Endothelial cell of umbilical vein (primary cell): ENCODE measurements at regions of chr1 and their contacts with region 1.

Region 1: DNA sequence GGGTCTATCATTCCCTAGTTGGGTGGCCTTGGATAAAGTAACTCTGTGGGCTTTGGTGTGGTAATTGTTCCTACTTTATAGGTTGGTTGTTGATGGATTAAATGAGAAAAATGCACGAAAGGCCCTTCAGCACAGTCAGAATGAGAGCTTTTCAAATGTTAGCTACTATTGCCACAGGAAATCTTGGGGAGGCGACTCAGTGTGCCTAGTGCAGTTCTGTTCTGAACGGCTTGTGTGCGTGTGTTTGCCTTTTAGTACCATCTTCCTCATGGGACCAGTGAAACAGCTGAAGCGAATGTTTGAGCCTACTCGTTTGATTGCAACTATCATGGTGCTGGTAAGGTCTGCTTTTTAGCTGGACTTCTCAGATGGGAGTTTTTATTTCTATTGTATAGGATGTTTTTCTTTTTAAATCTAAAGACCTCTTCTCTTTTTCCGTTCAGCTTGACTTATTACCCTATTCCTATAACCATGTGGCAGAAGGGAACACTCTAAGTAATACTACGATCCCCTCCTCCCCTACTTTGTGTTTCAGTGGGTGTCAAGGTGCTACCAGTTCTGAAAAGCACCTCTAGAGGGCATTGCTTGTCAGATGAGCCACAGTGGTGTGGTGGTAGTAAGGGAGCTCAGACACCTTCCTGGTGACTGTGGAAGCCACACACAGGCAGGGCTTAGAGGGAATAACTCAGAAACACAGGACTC is 9.2 kb downstream of the SFT2D2 start:
- DNase-seq: peak; percentile 64
- H3K4me3 ChIP-seq: no peak overlapping the region
- H3K27ac ChIP-seq: no peak overlapping the region
- H3K4me1 ChIP-seq: no peaks in the 10 kb centered on the region
- H3K27me3 ChIP-seq: no peaks in the 10 kb centered on the region
- CTCF ChIP-seq: peak; percentile 75 to 79
- POLR2A ChIP-seq: no peak

Region 2: GRCh38 chr1:167881069-167881468 is 353.9 kb before region 1 on chr1:
- CTCF ChIA-PET with region 1: no interaction called
- POLR2A ChIA-PET with region 1: no interaction called
- dilution Hi-C with region 1: no loop called
- intact Hi-C with region 1: no loop called
- DNase-seq: no peak
- H3K4me3 ChIP-seq: no peak overlapping the region
- H3K27ac ChIP-seq: no peak overlapping the region
- H3K4me1 ChIP-seq: no peaks in the 10 kb centered on the region
- H3K27me3 ChIP-seq: no peaks in the 10 kb centered on the region
- CTCF ChIP-seq: no peak
- POLR2A ChIP-seq: no peak

Region 3: DNA sequence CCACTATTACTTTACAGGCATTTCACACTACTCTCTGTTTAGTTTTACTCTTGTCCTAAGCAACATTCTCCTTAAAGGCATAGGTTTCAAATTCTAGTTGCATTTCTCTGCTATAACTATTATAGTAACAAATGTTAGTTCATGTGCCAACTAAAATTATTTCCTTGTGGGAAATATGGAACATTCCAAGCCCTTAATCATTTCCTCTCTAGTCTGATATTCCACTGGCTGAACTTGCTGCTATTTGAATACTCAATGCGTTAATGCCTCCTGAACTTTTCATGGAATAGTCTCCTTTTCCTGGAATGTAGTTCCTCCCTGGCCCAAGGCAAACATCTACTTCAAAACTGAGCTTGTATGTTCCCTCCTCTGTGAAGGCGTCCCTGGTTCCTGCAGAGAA is 26.4 kb after region 1 on chr1:
- CTCF ChIA-PET with region 1: interaction called, 44 read pairs
- POLR2A ChIA-PET with region 1: no interaction called
- dilution Hi-C with region 1: no loop called
- intact Hi-C with region 1: no loop called
- DNase-seq: peak; percentile 90
- H3K4me3 ChIP-seq: peak overlapping the region in 1 of 3 experiments; percentile 39
- H3K27ac ChIP-seq: peak overlapping the region; percentile 84
- H3K4me1 ChIP-seq: peaks cover 28% of the 10 kb centered on the region
- H3K27me3 ChIP-seq: no peaks in the 10 kb centered on the region
- CTCF ChIP-seq: no peak
- POLR2A ChIP-seq: no peak

Region 4: GRCh38 chr1:168304865-168305264 is 69.9 kb after region 1 on chr1:
- CTCF ChIA-PET with region 1: interaction called, 14 read pairs
- POLR2A ChIA-PET with region 1: no interaction called
- dilution Hi-C with region 1: no loop called
- intact Hi-C with region 1: no loop called
- DNase-seq: no peak
- H3K4me3 ChIP-seq: no peak overlapping the region
- H3K27ac ChIP-seq: no peak overlapping the region
- H3K4me1 ChIP-seq: no peaks in the 10 kb centered on the region
- H3K27me3 ChIP-seq: no peaks in the 10 kb centered on the region
- CTCF ChIP-seq: no peak
- POLR2A ChIP-seq: no peak

Region 5: GRCh38 chr1:168328731-168329399 is 93.9 kb after region 1 on chr1:
- CTCF ChIA-PET with region 1: interaction called, 15 read pairs
- POLR2A ChIA-PET with region 1: no interaction called
- dilution Hi-C with region 1: no loop called
- intact Hi-C with region 1: no loop called
- DNase-seq: no peak
- H3K4me3 ChIP-seq: no peak overlapping the region
- H3K27ac ChIP-seq: no peak overlapping the region
- H3K4me1 ChIP-seq: no peaks in the 10 kb centered on the region
- H3K27me3 ChIP-seq: no peaks in the 10 kb centered on the region
- CTCF ChIP-seq: no peak
- POLR2A ChIP-seq: no peak

Region 6: GRCh38 chr1:168407832-168408535 is 173.0 kb after region 1 on chr1:
- CTCF ChIA-PET with region 1: no interaction called
- POLR2A ChIA-PET with region 1: no interaction called
- dilution Hi-C with region 1: no loop called
- intact Hi-C with region 1: no loop called
- DNase-seq: no peak
- H3K4me3 ChIP-seq: no peak overlapping the region
- H3K27ac ChIP-seq: no peak overlapping the region
- H3K4me1 ChIP-seq: no peaks in the 10 kb centered on the region
- H3K27me3 ChIP-seq: peaks cover 0 to 1% of the 10 kb centered on the region in 2 experiments
- CTCF ChIP-seq: no peak
- POLR2A ChIP-seq: no peak

Region 7: GRCh38 chr1:168572633-168573032 is 337.6 kb after region 1 on chr1:
- CTCF ChIA-PET with region 1: no interaction called
- POLR2A ChIA-PET with region 1: no interaction called
- dilution Hi-C with region 1: no loop called
- intact Hi-C with region 1: loop called (anchors 2 kb)
- DNase-seq: no peak
- H3K4me3 ChIP-seq: no peak overlapping the region
- H3K27ac ChIP-seq: no peak overlapping the region
- H3K4me1 ChIP-seq: no peaks in the 10 kb centered on the region
- H3K27me3 ChIP-seq: no peaks in the 10 kb centered on the region
- CTCF ChIP-seq: no peak
- POLR2A ChIP-seq: no peak

Region 8: GRCh38 chr1:169106095-169106920 is 871.3 kb after region 1 on chr1 and contains the start of gene ATP1B1:
- CTCF ChIA-PET with region 1: no interaction called
- POLR2A ChIA-PET with region 1: no interaction called
- dilution Hi-C with region 1: no loop called
- intact Hi-C with region 1: no loop called
- DNase-seq: peak; percentile 87
- H3K4me3 ChIP-seq: peak within 1 kb of the TSS; percentile 89 to 99 (median 94)
- H3K27ac ChIP-seq: peak within 1 kb of the TSS; percentile 89
- H3K4me1 ChIP-seq: peaks cover 35% of the 10 kb centered on the region
- H3K27me3 ChIP-seq: no peaks in the 10 kb centered on the region
- CTCF ChIP-seq: peak in 1 of 2 donors; percentile 44
- POLR2A ChIP-seq: peak; percentile 90
- total RNA-seq, gene ATP1B1: 56.1 and 60.5 TPM in 2 replicates